Left ventricle myocardium inferior (tissue), 1 donor: ENCODE measurements at regions of chr10 and their contacts with region 1.

Region 1: DNA sequence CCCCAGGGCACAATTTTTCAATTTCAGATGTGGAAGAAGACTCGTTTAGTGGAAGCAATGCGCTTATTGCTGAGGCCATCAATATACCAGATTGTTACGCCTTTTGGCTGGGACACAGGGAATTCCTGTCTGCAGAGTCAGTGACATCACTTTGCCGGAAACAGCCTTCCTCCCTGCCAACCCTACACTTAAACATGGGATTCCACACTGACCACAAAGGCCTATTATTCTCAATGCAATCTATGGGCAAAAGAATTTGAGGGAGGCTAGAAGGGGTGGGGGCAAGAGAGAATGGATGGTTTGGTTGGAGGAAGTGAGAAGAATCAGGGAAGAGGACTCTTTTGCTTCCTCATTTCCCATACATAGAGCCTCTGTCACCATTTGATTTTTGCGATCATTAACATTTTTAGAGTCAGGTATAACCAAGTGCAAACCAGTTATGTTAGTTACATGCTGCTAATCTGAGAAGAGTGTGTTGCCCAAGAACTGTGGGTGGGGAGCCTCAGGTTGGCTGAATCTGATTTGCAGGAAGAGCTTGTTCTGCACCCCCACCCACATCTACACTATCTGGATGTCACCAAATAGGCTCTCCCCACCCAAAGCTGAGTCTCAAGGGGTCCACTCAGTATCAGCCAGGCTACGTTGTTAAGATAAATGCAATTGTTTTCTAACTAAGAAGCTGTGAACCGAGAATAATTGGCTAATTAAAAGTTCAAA is 58.2 kb downstream of the ENTPD1 start:
- DNase-seq: no peak
- H3K4me3 ChIP-seq: no peak overlapping the region
- H3K27ac ChIP-seq: peak overlapping the region; percentile 55
- H3K4me1 ChIP-seq: peaks cover 35% of the 10 kb centered on the region
- H3K27me3 ChIP-seq: no peaks in the 10 kb centered on the region
- CTCF ChIP-seq: no peak

Region 2: DNA sequence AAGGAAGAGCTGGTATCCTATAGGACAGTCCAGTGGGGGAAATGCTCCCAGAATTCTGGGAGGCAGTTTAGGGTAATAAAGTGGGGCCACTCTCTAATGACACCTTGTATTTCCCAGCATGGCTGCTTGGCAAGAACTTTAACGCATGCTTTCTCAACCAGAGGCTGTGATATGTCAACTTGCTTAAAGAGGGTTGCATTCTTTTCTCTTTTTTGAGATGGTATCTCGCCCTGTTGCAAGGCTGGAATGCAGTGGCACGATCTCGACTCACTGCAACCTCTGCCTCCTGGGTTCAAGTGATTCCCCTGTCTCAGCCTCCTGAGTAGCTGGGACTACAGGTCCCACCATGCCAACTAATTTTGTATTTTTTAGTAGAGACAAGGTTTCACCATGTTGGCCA is 196.0 kb before region 1 on chr10:
- intact Hi-C with region 1: no loop called
- DNase-seq: no peak
- H3K4me3 ChIP-seq: no peak overlapping the region
- H3K27ac ChIP-seq: no peak overlapping the region
- H3K4me1 ChIP-seq: no peaks in the 10 kb centered on the region
- H3K27me3 ChIP-seq: no peaks in the 10 kb centered on the region
- CTCF ChIP-seq: no peak

Region 3: GRCh38 chr10:95767884-95768556 is 46.1 kb before region 1 on chr10:
- intact Hi-C with region 1: loop called (anchors 10 kb)
- DNase-seq: peak; percentile 25
- H3K4me3 ChIP-seq: no peak overlapping the region
- H3K27ac ChIP-seq: peak overlapping the region; percentile 20
- H3K4me1 ChIP-seq: no peaks in the 10 kb centered on the region
- H3K27me3 ChIP-seq: no peaks in the 10 kb centered on the region
- CTCF ChIP-seq: no peak

Region 4: DNA sequence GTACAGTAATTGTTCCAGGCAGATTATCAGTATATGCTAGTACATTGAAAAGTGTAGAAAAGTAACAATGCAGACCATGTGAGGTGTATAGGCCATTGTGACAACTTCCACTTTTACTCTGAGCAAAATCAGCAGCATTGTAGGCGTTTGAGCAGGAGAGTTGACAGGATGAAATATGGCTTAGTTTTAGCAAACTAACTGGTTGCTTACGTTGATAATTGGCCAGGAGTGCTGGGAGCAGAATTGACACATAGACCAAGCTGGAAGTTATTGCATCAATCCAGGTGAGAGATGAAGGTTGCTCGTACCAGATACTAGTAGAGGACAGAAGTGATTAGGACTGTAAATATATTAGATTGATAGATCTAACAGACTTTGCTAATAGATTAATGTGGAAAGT is 1063.9 kb after region 1 on chr10:
- intact Hi-C with region 1: no loop called
- DNase-seq: no peak
- H3K4me3 ChIP-seq: no peak overlapping the region
- H3K27ac ChIP-seq: no peak overlapping the region
- H3K4me1 ChIP-seq: peaks cover 71% of the 10 kb centered on the region
- H3K27me3 ChIP-seq: no peaks in the 10 kb centered on the region
- CTCF ChIP-seq: no peak